Transverse colon (tissue), 4 donors: ENCODE measurements at regions of chr15 and their contacts with region 1.

Region 1: DNA sequence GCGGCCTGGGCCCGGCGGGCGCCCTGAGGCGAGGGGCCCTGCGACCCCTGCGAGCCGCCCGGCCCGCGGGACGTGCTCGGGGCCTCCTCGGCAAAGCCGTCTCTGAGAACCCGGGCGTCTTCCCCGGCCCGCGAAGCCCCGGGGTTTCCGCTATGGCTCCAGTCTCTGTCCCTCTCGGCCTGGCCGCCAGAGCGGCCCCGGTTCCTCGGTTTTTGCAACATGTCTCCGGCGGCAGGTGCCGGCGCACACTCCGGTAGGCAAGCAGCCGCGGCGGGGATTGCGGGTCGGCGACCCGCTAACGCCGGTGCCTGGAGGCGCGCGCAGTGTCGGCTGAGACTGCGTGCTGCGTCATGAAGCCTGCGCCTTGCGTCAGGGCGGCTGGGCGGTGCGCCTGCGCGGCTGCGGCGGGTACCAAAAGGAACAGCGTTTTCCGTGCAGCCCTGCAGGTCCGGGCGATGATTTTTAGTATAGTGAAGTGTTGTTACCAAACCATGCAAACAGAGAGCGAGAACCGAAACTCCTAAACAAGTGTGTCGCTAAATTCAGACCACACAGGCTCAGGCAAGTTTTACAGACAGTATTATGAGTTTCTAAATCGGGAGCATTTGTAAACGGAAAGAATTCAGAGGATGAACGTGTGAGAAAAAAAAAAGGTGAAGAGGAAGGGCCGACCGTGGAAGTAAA is at the start of gene NSMCE3:
- DNase-seq: peak; percentile 92
- H3K4me3 ChIP-seq: peak within 1 kb of the TSS; percentile 66 to 96 (median 89)
- H3K27ac ChIP-seq: peak within 1 kb of the TSS; percentile 91 to 98 (median 96)
- H3K4me1 ChIP-seq: peaks cover 0 to 32% (median 21%) of the 10 kb centered on the region in 4 donors
- H3K27me3 ChIP-seq: no peaks in the 10 kb centered on the region
- CTCF ChIP-seq: no peak
- EP300 ChIP-seq: no peak
- POLR2A ChIP-seq: peak; percentile 90
- total RNA-seq, gene NSMCE3: 2.2 to 8.3 (median 5.7) TPM

Region 2: DNA sequence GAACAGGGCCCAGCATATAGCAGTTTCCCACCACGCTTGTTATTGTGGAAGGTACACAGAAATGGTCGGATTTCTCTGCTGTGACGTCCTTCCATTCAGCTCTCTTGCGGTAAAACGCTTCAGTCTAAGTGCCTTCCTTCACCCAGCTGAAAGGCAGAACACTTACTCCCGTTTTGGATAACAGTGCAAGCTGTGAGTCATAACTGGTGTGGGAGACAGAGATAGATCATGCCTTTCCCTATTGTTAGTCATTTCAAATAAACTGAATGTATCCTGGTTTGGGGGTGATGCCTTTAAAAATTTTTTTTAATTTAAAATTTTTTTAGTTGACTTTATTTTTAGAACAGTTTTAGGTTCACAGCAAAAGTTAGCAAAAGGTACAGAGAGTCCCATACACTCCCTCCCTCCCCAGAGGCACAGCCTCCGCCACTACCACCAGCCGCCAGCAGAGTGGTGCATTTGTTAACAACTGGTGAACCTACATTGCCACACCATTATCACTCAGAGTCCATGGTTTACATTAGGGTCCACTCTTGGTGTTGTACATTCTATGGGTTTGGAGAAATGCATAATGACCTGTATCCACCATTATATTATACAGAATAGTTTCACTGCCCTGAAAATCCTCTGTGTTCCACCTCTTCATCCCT is 94.9 kb after region 1 on chr15:
- in situ Hi-C with region 1: no loop called
- intact Hi-C with region 1: loop called (anchors 5 kb)
- DNase-seq: no peak
- H3K4me3 ChIP-seq: no peak overlapping the region
- H3K27ac ChIP-seq: peak overlapping the region in 1 of 4 donors; percentile 47
- H3K4me1 ChIP-seq: no peaks in the 10 kb centered on the region
- H3K27me3 ChIP-seq: no peaks in the 10 kb centered on the region
- CTCF ChIP-seq: peak; percentile 25 to 36 (median 33)
- EP300 ChIP-seq: peak; percentile 54
- POLR2A ChIP-seq: no peak

Region 3: DNA sequence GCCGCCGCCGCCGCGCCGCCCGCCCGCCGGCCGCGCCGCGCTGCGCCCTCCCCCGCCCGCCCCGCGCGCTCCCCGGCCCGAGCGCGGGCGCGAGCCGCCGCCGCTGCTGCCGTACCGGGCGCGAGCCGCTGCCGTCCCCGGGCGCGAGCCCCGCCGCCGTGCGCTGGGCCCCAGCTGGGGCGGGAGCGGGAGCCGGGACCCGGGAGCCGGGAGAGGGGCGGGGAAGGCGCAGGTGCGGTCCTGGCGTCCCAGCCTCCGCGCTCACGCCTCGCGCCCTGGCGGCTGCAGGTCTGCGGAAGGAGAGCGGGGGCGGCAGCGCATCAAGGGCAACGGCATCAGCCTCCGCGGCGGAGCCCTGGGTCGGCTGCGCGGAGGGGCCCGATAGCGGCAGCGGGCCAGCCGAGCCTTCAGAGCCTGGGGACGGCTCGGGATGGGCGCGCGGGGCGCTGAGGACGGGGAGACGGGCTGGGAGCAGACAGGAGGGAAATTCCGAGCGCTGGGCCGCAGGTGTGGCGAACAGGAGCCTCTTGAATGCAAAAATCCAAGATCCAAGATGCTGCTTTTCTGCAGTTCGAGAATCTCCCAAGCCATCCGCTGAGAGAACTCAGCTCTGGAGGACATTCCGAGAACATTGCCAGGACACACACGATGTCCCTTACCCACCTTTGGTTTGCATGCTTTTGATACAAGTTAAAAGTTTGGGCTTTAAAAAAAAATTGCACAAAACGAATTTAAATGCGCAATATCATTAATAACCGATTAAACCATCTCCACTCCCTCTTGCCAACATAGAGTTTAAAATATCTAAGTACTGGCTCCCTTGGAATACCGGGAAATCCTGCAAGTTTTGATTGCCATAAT is 301.5 kb after region 1 on chr15:
- in situ Hi-C with region 1: no loop called
- intact Hi-C with region 1: loop called (anchors 10 kb)
- DNase-seq: peak; percentile 50
- H3K4me3 ChIP-seq: peak overlapping the region; percentile 22 to 59 (median 47)
- H3K27ac ChIP-seq: peak overlapping the region; percentile 63 to 83 (median 72)
- H3K4me1 ChIP-seq: peaks cover 5 to 32% (median 16%) of the 10 kb centered on the region in 4 donors
- H3K27me3 ChIP-seq: peaks cover 53% of the 10 kb centered on the region
- CTCF ChIP-seq: no peak
- EP300 ChIP-seq: no peak
- POLR2A ChIP-seq: no peak

Region 4: DNA sequence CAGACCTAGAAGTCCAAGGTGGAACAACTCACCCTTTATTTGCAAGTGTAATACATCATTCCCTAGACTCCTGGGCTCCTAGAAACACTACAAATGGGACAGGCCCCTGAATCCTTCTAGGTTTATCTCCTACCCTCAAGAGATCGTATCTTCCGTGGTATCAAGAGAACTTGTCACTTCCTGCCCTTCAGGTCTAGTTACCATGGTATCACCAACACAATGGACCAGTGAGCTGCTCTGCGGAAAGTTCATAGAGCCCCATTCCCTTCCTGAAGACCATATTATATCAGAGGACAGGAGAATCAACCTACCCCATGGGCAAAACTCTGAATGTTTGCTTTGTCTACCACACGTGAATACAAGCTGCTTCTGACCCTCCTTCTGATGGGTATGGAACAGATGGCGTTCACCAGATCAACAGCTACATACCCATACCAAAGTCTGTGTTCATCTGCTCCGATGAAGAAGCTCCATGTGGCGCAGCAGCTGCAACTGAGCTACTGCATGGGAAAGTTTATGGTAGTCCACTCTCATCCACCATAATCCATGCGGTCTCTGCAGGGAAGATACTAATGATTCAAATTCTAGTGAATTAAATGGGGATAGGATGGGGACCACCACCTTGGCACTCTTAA is 1972.4 kb after region 1 on chr15:
- in situ Hi-C with region 1: no loop called
- intact Hi-C with region 1: no loop called
- DNase-seq: no peak
- H3K4me3 ChIP-seq: no peak overlapping the region
- H3K27ac ChIP-seq: no peak overlapping the region
- H3K4me1 ChIP-seq: peaks cover 0 to 5% (median 2%) of the 10 kb centered on the region in 4 donors
- H3K27me3 ChIP-seq: no peaks in the 10 kb centered on the region
- CTCF ChIP-seq: no peak
- EP300 ChIP-seq: no peak
- POLR2A ChIP-seq: no peak